ENCODE measurements at regions of chr12 and their contacts with region 1.

Region 1: GRCh38 chr12:6927379-6928024 is at the start of gene ATN1:
- DNase-seq: peak; percentile 86
- ATAC-seq: peak; percentile 19
- H3K4me3 Mint-ChIP-seq: peak within 1 kb of the TSS; percentile 94
- H3K27ac Mint-ChIP-seq: peak within 1 kb of the TSS; percentile 98
- H3K4me1 Mint-ChIP-seq: peaks cover 58% of the 10 kb centered on the region
- H3K27me3 Mint-ChIP-seq: no peaks in the 10 kb centered on the region
- CTCF ChIP-seq: no peak
- total RNA-seq, gene ATN1: 80.0 to 87.1 TPM (median 80.5 TPM) in 3 replicates

Region 2: GRCh38 chr12:6890789-6891645 is 36.5 kb before region 1 on chr12:
- CTCF ChIA-PET with region 1: interaction called, 31 read pairs
- POLR2A ChIA-PET with region 1: interaction called, 8 read pairs
- DNase-seq: peak; percentile 99
- ATAC-seq: peak; percentile 92
- H3K4me3 Mint-ChIP-seq: peak overlapping the region; percentile 71
- H3K27ac Mint-ChIP-seq: peak overlapping the region; percentile 99
- H3K4me1 Mint-ChIP-seq: peaks cover 33% of the 10 kb centered on the region
- H3K27me3 Mint-ChIP-seq: peaks cover 4% of the 10 kb centered on the region; the same call in 1 of the 2 replicates
- CTCF ChIP-seq: peak; percentile 35

Region 3: DNA sequence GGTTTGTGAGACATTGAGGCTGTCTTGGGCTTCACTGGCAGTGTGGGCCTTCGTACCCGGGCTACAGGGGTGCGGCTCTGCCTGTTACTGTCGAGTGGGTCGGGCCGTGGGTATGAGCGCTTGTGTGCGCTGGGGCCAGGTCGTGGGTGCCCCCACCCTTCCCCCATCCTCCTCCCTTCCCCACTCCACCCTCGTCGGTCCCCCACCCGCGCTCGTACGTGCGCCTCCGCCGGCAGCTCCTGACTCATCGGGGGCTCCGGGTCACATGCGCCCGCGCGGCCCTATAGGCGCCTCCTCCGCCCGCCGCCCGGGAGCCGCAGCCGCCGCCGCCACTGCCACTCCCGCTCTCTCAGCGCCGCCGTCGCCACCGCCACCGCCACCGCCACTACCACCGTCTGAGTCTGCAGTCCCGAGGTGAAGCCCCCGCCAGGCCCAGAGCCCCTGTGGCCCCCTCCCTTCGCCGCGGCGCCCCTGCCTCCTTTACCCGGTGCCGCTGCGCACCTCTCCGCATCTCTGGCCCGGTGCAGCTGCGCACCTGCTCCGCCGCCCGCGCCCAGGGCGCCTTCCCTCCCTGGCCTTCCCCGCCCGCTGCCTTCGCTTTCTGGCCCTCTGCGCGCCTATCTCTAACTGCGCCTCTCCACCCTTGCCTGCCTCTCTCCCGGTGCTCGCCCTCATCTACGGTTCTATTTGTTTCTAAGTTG is 13.1 kb before region 1 on chr12 and contains the start of gene ENO2:
- CTCF ChIA-PET with region 1: interaction called, 17 read pairs
- POLR2A ChIA-PET with region 1: interaction called, 16 read pairs
- DNase-seq: peak; percentile 63
- ATAC-seq: peak; percentile 65
- H3K4me3 Mint-ChIP-seq: peak within 1 kb of the TSS; percentile 97
- H3K27ac Mint-ChIP-seq: peak within 1 kb of the TSS; percentile 64
- H3K4me1 Mint-ChIP-seq: peaks cover 33% of the 10 kb centered on the region
- H3K27me3 Mint-ChIP-seq: peaks cover 12% of the 10 kb centered on the region
- CTCF ChIP-seq: no peak
- total RNA-seq, gene ENO2: 118 to 170 TPM (median 165 TPM) in 3 replicates

Region 4: DNA sequence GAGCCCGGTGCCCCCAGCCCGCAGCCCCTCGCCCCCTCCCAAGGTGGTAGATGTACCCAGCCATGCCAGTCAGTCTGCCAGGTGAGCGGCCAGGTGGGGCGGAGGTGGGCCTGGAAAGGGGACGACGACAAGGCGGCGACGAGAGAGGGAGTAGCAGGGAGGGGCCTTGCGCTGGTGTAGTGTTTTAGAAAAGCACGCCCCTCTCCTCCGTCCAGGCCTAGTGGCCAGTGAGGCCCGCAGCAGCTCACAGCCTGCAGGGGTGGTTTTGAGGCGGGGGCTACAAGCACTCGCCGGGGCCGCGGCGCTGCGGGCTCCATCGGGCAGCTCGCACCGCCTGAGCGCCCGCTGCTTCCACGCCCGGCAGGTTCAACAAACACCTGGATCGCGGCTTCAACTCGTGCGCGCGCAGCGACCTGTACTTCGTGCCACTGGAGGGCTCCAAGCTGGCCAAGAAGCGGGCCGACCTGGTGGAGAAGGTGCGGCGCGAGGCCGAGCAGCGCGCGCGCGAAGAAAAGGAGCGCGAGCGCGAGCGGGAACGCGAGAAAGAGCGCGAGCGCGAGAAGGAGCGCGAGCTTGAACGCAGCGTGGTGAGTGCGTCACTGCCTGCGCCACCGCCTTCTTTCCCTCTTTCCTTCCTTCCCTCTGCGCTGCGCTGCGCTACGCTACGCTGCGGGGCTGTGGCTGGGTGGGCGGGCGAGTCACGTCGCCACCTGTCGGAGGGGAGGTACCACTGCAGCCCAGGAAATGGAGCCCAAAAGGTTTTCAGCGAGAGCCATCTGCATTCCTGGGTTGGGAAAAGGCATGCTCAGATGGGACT is 10.2 kb after region 1 on chr12:
- CTCF ChIA-PET with region 1: interaction called, 93 read pairs
- POLR2A ChIA-PET with region 1: interaction called, 66 read pairs
- DNase-seq: peak; percentile 94
- ATAC-seq: peak; percentile 83
- H3K4me3 Mint-ChIP-seq: peak overlapping the region; percentile 69
- H3K27ac Mint-ChIP-seq: peak overlapping the region; percentile 93
- H3K4me1 Mint-ChIP-seq: peaks cover 29% of the 10 kb centered on the region
- H3K27me3 Mint-ChIP-seq: no peaks in the 10 kb centered on the region
- CTCF ChIP-seq: peak; percentile 92

Region 5: GRCh38 chr12:6944381-6945186 is 17.1 kb after region 1 on chr12:
- CTCF ChIA-PET with region 1: interaction called, 93 read pairs
- POLR2A ChIA-PET with region 1: interaction called, 66 read pairs
- DNase-seq: peak; percentile 92
- ATAC-seq: peak; percentile 25
- H3K4me3 Mint-ChIP-seq: peak overlapping the region; percentile 98
- H3K27ac Mint-ChIP-seq: peak overlapping the region; percentile 99
- H3K4me1 Mint-ChIP-seq: peaks cover 34% of the 10 kb centered on the region
- H3K27me3 Mint-ChIP-seq: no peaks in the 10 kb centered on the region
- CTCF ChIP-seq: no peak

Region 6: GRCh38 chr12:6965026-6965661 is 37.6 kb after region 1 on chr12:
- CTCF ChIA-PET with region 1: interaction called, 35 read pairs
- POLR2A ChIA-PET with region 1: interaction called, 13 read pairs
- DNase-seq: peak; percentile 85
- ATAC-seq: peak; percentile 25
- H3K4me3 Mint-ChIP-seq: peak overlapping the region; percentile 75
- H3K27ac Mint-ChIP-seq: peak overlapping the region; percentile 95
- H3K4me1 Mint-ChIP-seq: peaks cover 60% of the 10 kb centered on the region
- H3K27me3 Mint-ChIP-seq: no peaks in the 10 kb centered on the region
- CTCF ChIP-seq: peak; percentile 71

Region 7: DNA sequence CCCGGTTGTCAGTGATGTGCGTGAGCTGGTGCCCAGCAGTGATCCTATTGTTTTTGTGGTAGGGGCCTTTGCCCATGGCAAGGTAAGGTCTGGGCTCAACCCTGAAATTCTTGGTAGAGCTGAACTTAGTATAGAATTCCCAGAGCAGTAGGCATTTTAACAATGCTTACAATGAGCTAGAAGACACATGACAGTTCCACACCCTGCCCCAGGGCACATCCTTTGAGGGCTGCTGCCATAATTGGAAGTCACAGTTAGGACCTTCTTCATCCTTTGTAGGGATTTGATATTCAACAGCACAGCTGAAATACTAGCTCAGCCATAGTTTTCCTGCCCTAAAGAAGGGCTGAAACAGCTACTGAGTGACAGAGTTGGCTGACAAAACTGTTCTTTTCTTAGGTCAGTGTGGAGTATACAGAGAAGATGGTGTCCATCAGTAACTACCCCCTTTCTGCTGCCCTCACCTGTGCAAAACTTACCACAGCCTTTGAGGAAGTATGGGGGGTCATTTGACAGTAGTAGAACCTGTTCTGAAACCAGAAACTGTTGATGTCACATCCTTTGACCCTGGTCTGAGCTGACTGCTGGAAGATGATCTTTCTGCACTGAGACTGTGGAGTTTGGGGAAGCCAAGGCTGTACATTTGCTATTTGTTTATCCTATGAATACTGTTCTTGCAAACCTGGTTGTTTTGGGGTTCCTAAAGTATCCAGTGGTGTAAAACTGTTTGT is 48.0 kb after region 1 on chr12:
- CTCF ChIA-PET with region 1: no interaction called
- POLR2A ChIA-PET with region 1: no interaction called
- DNase-seq: no peak
- ATAC-seq: no peak
- H3K4me3 Mint-ChIP-seq: no peak overlapping the region
- H3K27ac Mint-ChIP-seq: no peak overlapping the region
- H3K4me1 Mint-ChIP-seq: peaks cover 10% of the 10 kb centered on the region
- H3K27me3 Mint-ChIP-seq: no peaks in the 10 kb centered on the region
- CTCF ChIP-seq: no peak

Region 8: GRCh38 chr12:7039403-7039802 is 111.9 kb after region 1 on chr12:
- CTCF ChIA-PET with region 1: no interaction called
- POLR2A ChIA-PET with region 1: no interaction called
- DNase-seq: no peak
- ATAC-seq: no peak
- H3K4me3 Mint-ChIP-seq: no peak overlapping the region
- H3K27ac Mint-ChIP-seq: no peak overlapping the region
- H3K4me1 Mint-ChIP-seq: peaks cover 29% of the 10 kb centered on the region
- H3K27me3 Mint-ChIP-seq: no peaks in the 10 kb centered on the region
- CTCF ChIP-seq: no peak

Region 9: GRCh38 chr12:7084894-7085293 is 157.4 kb after region 1 on chr12:
- CTCF ChIA-PET with region 1: no interaction called
- POLR2A ChIA-PET with region 1: no interaction called
- DNase-seq: no peak
- ATAC-seq: no peak
- H3K4me3 Mint-ChIP-seq: no peak overlapping the region
- H3K27ac Mint-ChIP-seq: no peak overlapping the region
- H3K4me1 Mint-ChIP-seq: peaks cover under 1% of the 10 kb centered on the region; the same call in 1 of the 2 replicates
- H3K27me3 Mint-ChIP-seq: no peaks in the 10 kb centered on the region
- CTCF ChIP-seq: no peak